GM12878 (cell line): ENCODE measurements at regions of chr7 and their contacts with region 1.

Region 1: DNA sequence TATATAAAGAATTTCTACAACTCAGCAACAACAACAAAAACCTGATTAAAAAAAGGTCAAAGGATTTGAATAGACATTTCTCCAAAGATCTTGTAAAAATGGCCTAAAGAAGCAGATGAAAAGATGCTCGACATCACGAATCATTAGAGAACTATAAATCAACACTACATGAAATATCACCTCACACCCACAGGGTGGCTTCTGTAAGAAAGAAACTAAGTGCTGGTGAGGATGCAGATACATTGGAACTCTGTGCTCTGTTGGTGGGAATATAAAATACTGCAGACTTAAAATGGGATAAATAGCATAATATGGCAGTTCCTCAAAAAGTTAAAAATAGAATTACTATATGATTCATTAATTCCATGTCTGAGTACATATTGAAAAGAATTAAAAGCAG is 38.3 kb upstream of the CDCA7L start:
- DNase-seq: no peak
- ATAC-seq: no peak
- H3K4me3 ChIP-seq: no peak overlapping the region
- H3K27ac ChIP-seq: no peak overlapping the region
- H3K4me1 ChIP-seq: no peaks in the 10 kb centered on the region
- H3K27me3 ChIP-seq: no peaks in the 10 kb centered on the region; a peak in 1 of 4 replicates
- CTCF ChIP-seq: no peak
- EP300 ChIP-seq: no peak
- POLR2A ChIP-seq: no peak
- RAD21 ChIP-seq: no peak

Region 2: GRCh38 chr7:21883069-21883468 is 101.0 kb before region 1 on chr7:
- CTCF ChIA-PET with region 1: no interaction called
- POLR2A ChIA-PET with region 1: no interaction called
- RAD21 ChIA-PET with region 1: no interaction called
- SMC1A ChIA-PET with region 1: no interaction called
- in situ Hi-C with region 1: no loop called
- intact Hi-C with region 1: loop called (anchors 5 kb)
- DNase-seq: no peak
- ATAC-seq: no peak
- H3K4me3 ChIP-seq: no peak overlapping the region
- H3K27ac ChIP-seq: no peak overlapping the region
- H3K4me1 ChIP-seq: no peaks in the 10 kb centered on the region
- H3K27me3 ChIP-seq: no peaks in the 10 kb centered on the region
- CTCF ChIP-seq: no peak
- EP300 ChIP-seq: no peak
- POLR2A ChIP-seq: no peak
- RAD21 ChIP-seq: no peak